ENCODE measurements at regions of chr6 and their contacts with region 1.

Region 1: DNA sequence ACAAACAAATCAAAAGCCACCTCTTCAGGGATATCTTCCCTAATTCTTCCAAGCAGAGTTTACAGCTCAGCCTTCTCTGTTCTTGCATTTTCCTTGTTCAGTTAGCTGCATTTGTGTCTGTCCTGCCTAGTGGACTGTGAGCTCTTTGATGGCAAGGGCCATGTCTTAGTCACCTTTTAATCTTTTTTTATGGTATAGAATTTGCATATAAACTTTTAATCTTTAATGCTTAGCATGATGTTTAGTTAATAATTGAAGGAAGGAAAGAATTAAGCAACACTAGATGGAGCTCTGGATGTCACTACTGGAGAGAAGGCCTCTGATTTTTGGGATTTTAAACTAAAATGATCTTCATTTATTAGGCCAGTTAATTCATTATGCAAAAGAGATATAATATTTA is 12.1 kb downstream of the PPP2R5D start:
- DNase-seq: no peak
- H3K4me3 Mint-ChIP-seq: no peak overlapping the region
- H3K27ac Mint-ChIP-seq: no peak overlapping the region
- H3K4me1 Mint-ChIP-seq: no peaks in the 10 kb centered on the region
- H3K27me3 Mint-ChIP-seq: no peaks in the 10 kb centered on the region
- CTCF ChIP-seq: no peak

Region 2: DNA sequence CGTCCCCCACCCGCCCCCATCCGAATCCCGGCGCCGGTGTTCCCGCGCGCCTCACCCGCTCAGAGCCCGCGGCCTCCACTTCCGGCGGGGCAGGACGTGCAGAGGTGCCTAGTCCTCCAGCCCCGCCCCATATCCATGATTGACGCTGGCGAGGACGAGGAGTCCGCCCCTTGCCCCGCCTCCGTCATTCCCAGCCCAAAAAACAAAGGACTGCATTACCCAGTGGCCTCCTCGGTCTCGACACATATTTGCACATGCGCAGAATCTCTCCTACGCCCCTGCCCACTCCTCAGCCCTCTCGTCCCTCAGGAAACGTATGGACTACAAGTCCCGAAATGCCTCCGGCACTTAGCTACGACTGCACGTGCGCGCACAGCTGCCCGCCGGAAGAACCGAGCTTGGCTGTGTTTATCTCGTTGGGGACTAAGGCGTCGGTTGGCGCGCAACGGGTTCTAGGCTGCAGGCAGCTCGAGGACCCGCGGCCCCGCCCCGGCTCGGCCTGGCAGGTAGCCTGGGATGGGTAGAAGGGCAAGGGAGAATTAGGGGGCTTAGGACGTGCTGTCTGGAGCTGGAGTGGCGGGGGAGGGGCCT is 17.4 kb after region 1 on chr6 and contains the starts of genes KLHDC3 and MEA1:
- CTCF ChIA-PET with region 1: interaction called, 9 read pairs
- intact Hi-C with region 1: loop called (anchors 2 kb)
- DNase-seq: peak; percentile 100
- H3K4me3 Mint-ChIP-seq: peak within 1 kb of the TSS; percentile 97
- H3K27ac Mint-ChIP-seq: peak within 1 kb of the TSS; percentile 85
- H3K4me1 Mint-ChIP-seq: peaks cover 28% of the 10 kb centered on the region
- H3K27me3 Mint-ChIP-seq: no peaks in the 10 kb centered on the region
- CTCF ChIP-seq: no peak
- total RNA-seq, gene KLHDC3: 85.9 and 95.7 TPM in 2 replicates
- total RNA-seq, gene MEA1: 110 and 115 TPM in 2 replicates

Region 3: DNA sequence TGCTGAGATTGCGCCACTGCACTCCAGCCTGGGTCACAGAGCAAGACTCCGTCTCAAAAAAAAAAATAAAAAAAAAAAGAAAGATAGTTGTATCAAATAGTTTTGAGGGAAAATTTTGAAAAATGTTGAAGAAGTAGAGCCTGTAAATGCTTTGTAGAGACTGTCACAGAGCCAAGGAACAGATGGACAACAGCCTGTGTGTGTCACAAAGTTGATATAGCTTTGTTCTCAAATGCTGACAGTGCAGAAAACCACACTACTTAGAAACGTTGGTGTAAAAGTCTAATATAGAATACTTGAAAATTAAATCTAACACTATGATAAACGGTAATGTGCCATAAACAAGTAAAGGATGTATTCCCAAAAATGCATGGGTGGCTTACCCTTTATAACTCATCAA is 105.0 kb after region 1 on chr6:
- CTCF ChIA-PET with region 1: interaction called, 10 read pairs
- intact Hi-C with region 1: no loop called
- DNase-seq: no peak
- H3K4me3 Mint-ChIP-seq: no peak overlapping the region
- H3K27ac Mint-ChIP-seq: no peak overlapping the region
- H3K4me1 Mint-ChIP-seq: peaks cover 20% of the 10 kb centered on the region
- H3K27me3 Mint-ChIP-seq: no peaks in the 10 kb centered on the region
- CTCF ChIP-seq: no peak

Measured in Calu3 (cell line).